ENCODE measurements at regions of chr20 and their contacts with region 1.

Region 1: GRCh38 chr20:3109350-3110302 is 25.1 kb upstream of the AVP start:
- DNase-seq: no peak
- ATAC-seq: no peak
- H3K4me3 ChIP-seq: no peak overlapping the region
- H3K27ac ChIP-seq: no peak overlapping the region
- H3K4me1 ChIP-seq: no peaks in the 10 kb centered on the region
- H3K27me3 ChIP-seq: no peaks in the 10 kb centered on the region
- CTCF ChIP-seq: no peak

Region 2: DNA sequence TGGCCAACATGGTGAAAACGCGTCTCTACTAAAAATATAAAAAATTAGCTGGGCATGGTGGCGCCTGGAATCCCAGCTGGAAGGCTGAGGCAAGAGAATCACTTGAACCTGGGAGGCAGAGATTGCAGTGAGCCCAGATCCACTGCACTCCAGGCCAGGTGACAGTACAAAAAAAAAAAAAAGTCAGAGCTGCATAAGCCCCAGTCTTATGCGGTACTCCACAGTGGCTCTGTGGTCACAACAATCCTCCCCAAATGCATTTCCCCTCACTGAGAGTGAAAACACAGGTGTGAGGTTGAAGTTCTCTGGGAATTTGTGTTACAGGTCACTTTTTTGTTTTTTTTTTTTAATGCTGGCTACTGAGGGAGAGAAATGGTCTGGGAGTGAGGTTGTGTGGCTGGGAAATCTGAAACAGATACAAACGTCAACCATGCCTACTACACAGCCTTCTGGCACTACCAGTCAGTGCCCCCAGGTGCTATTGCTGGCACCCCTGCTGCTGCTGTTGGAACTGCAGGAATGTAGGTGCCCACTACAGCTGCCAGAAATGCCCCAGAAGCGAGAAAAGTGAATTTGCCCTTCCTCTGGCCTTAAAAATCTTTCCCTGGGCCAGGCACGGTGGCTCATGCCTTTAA is 58.1 kb before region 1 on chr20:
- intact Hi-C with region 1: loop called in 1 of 2 experiments (anchors 5 kb)
- DNase-seq: no peak
- ATAC-seq: no peak
- H3K4me3 ChIP-seq: no peak overlapping the region
- H3K27ac ChIP-seq: no peak overlapping the region
- H3K4me1 ChIP-seq: peaks cover 7% of the 10 kb centered on the region
- H3K27me3 ChIP-seq: no peaks in the 10 kb centered on the region
- CTCF ChIP-seq: no peak

Region 3: DNA sequence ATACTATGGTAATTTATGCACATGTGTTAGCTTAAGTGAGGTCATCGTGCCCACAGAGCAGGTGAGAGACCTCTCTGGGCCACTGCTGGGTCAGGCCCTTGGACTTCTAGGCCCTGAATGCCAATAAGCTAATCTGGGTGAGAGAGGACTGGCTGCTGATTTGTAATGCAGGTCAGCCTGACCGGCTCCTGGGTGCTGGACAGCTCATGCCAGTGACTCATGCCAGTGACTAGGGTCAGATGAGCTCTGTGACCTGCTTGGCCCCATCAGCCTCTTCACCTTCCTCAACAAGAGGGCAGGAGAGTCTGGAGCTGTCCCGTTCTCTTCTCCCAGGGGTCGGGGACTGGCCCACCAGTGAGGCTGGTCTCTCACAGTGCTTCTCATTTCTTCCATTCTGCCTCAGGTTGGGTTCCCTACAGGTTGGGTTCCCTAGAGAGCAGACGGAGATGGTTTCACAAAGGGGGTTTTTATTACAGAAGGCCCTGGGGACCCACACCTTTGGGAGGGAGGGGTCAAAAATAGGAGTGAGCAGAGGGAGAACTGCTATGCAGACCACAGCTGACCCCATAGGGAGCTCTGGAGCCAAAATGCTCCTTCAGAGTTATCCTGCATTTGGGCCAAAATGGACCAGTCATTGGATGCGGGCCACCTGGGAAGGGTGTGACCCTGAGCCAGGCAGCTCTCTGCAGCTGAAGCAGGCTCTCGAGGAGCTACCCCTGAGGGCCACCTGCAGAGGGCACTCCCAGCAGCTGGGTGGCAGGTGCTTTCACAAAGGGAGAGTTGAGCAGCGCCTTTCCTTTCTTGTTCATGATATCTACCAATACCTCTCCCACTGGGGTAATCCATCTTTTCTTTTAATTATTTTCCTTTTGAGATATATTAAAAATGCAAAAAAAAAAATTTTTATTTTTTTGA is 40.4 kb before region 1 on chr20:
- intact Hi-C with region 1: loop called in 1 of 2 experiments (anchors 5 kb)
- DNase-seq: no peak
- ATAC-seq: peak; percentile 71 to 79 (median 76)
- H3K4me3 ChIP-seq: no peak overlapping the region
- H3K27ac ChIP-seq: no peak overlapping the region
- H3K4me1 ChIP-seq: peaks cover 2% of the 10 kb centered on the region
- H3K27me3 ChIP-seq: peaks cover 0 to 16% (median 6%) of the 10 kb centered on the region in 3 donors
- CTCF ChIP-seq: peak; percentile 43